ENCODE measurements at regions of chr17 and their contacts with region 1.

Region 1: GRCh38 chr17:43125133-43125966 is at the start of gene BRCA1:
- DNase-seq: peak; percentile 99
- H3K4me3 Mint-ChIP-seq: peak within 1 kb of the TSS; percentile 100
- H3K27ac Mint-ChIP-seq: peak within 1 kb of the TSS; percentile 99
- H3K4me1 Mint-ChIP-seq: peaks cover 39% of the 10 kb centered on the region
- H3K27me3 Mint-ChIP-seq: no peaks in the 10 kb centered on the region
- total RNA-seq, gene BRCA1: 77.4 to 80.6 TPM

Region 2: GRCh38 chr17:42964161-42964932 is 161.0 kb before region 1 on chr17 and contains the start of gene AARSD1:
- CTCF ChIA-PET with region 1: no interaction called
- intact Hi-C with region 1: loop called (anchors 1 kb)
- DNase-seq: peak; percentile 96
- H3K4me3 Mint-ChIP-seq: peak within 1 kb of the TSS; percentile 97
- H3K27ac Mint-ChIP-seq: peak within 1 kb of the TSS; percentile 91
- H3K4me1 Mint-ChIP-seq: peaks cover 21% of the 10 kb centered on the region
- H3K27me3 Mint-ChIP-seq: no peaks in the 10 kb centered on the region
- total RNA-seq, gene AARSD1: 48.4 to 49.3 TPM

Region 3: DNA sequence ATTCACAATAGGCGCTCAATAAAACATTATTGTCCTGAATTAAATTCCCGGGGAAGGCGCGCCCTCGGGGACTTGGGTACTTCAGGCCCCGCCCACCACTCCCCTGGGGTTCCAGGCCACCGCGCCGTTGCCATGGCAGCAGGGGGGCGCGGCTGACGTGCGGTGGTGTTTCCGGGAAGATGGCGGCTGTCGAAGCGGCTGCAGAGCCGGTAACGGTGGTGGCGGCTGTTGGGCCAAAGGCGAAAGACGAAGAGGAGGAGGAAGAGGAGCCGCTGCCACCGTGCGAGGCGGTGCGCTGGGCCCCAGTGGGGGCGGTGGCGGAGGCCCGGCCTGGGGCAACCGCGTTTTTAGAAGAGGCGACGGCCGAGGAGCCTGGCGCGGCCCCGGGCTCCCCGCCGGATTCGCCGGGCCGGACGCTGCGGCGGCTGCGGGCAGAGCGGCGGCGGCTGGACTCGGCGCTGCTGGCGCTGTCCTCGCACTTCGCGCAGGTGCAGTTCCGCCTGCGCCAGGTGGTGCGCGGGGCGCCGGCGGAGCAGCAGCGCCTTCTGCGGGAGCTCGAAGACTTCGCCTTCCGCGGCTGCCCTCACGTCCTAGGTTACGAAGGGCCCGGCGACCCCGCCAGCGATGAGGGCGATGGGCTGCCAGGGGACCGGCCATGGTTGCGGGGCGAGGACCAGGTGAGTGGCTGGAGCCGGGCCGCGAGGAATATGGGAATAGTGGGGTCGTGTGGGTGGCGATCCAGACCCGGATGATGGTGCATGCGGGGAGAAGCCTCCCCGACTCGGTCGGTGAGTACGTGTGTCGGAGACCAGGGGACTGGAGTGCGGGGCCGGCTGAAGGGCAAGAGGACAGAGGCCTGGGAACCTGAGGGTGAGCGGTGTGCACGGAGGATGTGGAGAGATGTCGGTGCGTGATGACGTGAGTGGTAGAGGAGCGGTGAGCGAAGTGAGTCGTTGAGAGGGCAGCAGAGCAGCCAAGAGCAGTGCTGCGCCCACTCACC is 144.7 kb before region 1 on chr17 and contains the start of gene RUNDC1:
- CTCF ChIA-PET with region 1: no interaction called
- intact Hi-C with region 1: loop called (anchors 1 kb)
- DNase-seq: peak; percentile 90
- H3K4me3 Mint-ChIP-seq: peak within 1 kb of the TSS; percentile 99
- H3K27ac Mint-ChIP-seq: peak within 1 kb of the TSS; percentile 90
- H3K4me1 Mint-ChIP-seq: peaks cover 36% of the 10 kb centered on the region
- H3K27me3 Mint-ChIP-seq: no peaks in the 10 kb centered on the region
- total RNA-seq, gene RUNDC1: 5.9 to 6.5 TPM

Region 4: GRCh38 chr17:43006639-43007551 is 118.5 kb before region 1 on chr17 and contains the start of gene IFI35:
- CTCF ChIA-PET with region 1: no interaction called
- intact Hi-C with region 1: loop called (anchors 1 kb)
- DNase-seq: peak; percentile 94
- H3K4me3 Mint-ChIP-seq: peak within 1 kb of the TSS; percentile 100
- H3K27ac Mint-ChIP-seq: peak within 1 kb of the TSS; percentile 99
- H3K4me1 Mint-ChIP-seq: peaks cover 16% of the 10 kb centered on the region
- H3K27me3 Mint-ChIP-seq: no peaks in the 10 kb centered on the region
- total RNA-seq, gene IFI35: 43.9 to 50.5 TPM

Region 5: DNA sequence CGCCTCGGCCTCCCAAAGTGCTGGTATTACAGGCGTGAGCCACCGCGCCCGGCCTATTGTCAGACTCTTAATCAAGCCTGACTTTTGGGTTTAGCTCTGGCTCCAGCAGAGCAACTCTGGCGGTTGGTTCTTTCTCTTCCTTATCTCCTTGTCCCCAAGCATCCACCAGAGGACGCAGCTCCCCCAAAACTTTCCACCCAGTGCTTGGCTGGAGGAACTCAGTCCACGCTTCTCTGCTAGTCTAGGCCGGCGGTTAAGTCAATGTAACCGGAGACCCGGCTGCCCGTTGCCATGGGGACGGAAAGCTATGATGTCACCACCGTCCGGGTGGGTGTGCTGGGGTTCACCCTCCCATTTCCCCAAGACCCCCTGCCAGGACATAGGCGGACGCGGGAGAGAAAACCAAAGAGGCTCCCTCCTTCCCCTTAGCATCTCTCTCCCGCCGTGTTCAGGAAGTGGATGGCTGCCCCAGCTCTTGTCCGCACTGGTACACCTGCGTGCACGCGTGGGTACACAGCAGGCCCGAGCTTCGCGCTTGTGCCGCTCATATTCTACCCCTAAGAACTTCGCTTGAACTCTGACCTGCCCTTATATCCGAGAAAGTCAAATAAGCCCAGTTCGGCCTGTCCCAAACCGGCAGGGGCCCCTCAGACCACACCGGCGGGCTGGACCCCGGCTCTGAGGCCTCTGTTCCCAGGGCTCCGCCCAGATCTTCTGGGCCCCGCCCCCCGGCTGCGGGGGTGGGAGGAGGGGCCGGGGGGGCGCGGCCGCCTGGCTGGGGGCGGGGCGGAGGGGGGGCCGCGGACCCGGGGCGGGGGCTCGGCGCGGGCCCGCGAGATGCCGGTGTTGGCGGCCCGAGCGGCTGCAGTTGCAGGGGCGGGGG is 100.7 kb before region 1 on chr17 and contains the start of gene RND2:
- CTCF ChIA-PET with region 1: no interaction called
- intact Hi-C with region 1: loop called (anchors 1 kb)
- DNase-seq: peak; percentile 90
- H3K4me3 Mint-ChIP-seq: peak within 1 kb of the TSS; percentile 80
- H3K27ac Mint-ChIP-seq: no peak within 1 kb of the TSS
- H3K4me1 Mint-ChIP-seq: peaks cover 24% of the 10 kb centered on the region
- H3K27me3 Mint-ChIP-seq: no peaks in the 10 kb centered on the region
- total RNA-seq, gene RND2: not detected

Region 6: GRCh38 chr17:43106552-43106951 is 18.8 kb before region 1 on chr17:
- CTCF ChIA-PET with region 1: no interaction called
- intact Hi-C with region 1: no loop called
- DNase-seq: no peak
- H3K4me3 Mint-ChIP-seq: no peak overlapping the region
- H3K27ac Mint-ChIP-seq: no peak overlapping the region
- H3K4me1 Mint-ChIP-seq: no peaks in the 10 kb centered on the region
- H3K27me3 Mint-ChIP-seq: no peaks in the 10 kb centered on the region

Region 7: DNA sequence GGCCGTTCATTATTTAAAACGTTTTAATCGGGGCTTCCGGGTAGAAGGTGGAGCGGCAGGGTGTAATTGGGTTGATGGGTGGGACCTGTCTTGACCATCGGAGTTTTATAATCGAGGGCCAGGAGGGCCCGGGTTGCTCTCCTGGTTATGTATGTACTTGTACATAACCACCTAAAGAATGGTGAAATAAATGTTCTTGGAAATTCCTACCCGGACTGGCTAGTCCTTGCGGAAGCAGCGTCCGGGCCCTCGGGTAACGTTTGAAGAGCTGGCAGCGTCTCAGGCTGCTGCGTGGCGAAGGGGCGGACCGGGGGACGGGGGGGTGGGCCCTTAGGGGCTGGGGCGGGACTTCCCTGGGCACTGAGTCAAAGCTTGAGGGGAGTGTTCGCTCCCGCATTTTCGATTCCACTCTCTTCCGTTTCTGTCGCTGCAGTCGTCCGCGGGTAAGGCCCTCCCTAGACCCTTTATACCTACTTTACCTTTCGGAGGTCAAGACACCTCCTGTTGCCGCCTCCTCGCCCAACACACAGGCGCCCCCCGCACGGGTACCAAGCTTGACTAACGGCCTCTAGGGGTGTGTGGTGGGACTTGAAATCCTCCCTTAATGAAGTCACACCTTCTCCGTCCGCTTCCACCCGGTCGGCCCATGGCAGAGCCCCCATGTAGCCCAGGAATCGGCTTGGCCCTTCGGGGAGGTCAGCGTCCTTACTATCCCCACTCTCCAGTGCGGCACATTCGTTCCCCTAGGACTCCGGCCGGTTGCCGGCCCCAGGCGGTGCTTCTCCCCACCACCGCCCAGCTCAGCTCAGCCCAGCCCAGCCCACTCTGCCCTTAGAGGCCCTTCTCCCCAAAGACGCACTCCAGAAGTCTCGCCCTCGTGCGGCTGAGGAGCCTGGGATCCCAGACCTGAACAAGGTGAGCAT is 86.4 kb after region 1 on chr17 and contains the start of gene TMEM106A:
- CTCF ChIA-PET with region 1: no interaction called
- intact Hi-C with region 1: loop called (anchors 1 kb)
- DNase-seq: peak; percentile 82
- H3K4me3 Mint-ChIP-seq: peak within 1 kb of the TSS; percentile 94
- H3K27ac Mint-ChIP-seq: peak within 1 kb of the TSS; percentile 90
- H3K4me1 Mint-ChIP-seq: peaks cover 26% of the 10 kb centered on the region
- H3K27me3 Mint-ChIP-seq: no peaks in the 10 kb centered on the region
- total RNA-seq, gene TMEM106A: 5.8 to 7.1 TPM

Region 8: GRCh38 chr17:43314611-43315011 is 189.3 kb after region 1 on chr17:
- CTCF ChIA-PET with region 1: no interaction called
- intact Hi-C with region 1: loop called (anchors 1 kb)
- DNase-seq: no peak
- H3K4me3 Mint-ChIP-seq: no peak overlapping the region
- H3K27ac Mint-ChIP-seq: no peak overlapping the region
- H3K4me1 Mint-ChIP-seq: peaks cover 20% of the 10 kb centered on the region
- H3K27me3 Mint-ChIP-seq: no peaks in the 10 kb centered on the region

Measured in activated naive CD4-positive, alpha-beta T cell treated with anti-CD3 and anti-CD28 coated beads for 36 hours (primary cell).